H1 (cell line): ENCODE measurements at regions of chr21 and their contacts with region 1.

Region 1: GRCh38 chr21:42145569-42146272 is 73.2 kb upstream of the ABCG1 start:
- DNase-seq: peak; percentile 7 to 74
- H3K4me3 ChIP-seq: no peak overlapping the region
- H3K27ac ChIP-seq: no peak overlapping the region
- H3K4me1 ChIP-seq: no peaks in the 10 kb centered on the region
- H3K27me3 ChIP-seq: no peaks in the 10 kb centered on the region; a peak in 1 of 7 replicates
- CTCF ChIP-seq: peak; percentile 81 to 91 (median 88)
- EP300 ChIP-seq: no peak
- POLR2A ChIP-seq: no peak
- RAD21 ChIP-seq: peak; percentile 94 to 96

Region 2: GRCh38 chr21:42135386-42136052 is 10.2 kb before region 1 on chr21:
- CTCF ChIA-PET with region 1: interaction called, 10 read pairs
- POLR2A ChIA-PET with region 1: no interaction called
- DNase-seq: no peak
- H3K4me3 ChIP-seq: no peak overlapping the region
- H3K27ac ChIP-seq: no peak overlapping the region
- H3K4me1 ChIP-seq: no peaks in the 10 kb centered on the region
- H3K27me3 ChIP-seq: no peaks in the 10 kb centered on the region
- CTCF ChIP-seq: no peak
- EP300 ChIP-seq: no peak
- POLR2A ChIP-seq: no peak
- RAD21 ChIP-seq: no peak

Region 3: DNA sequence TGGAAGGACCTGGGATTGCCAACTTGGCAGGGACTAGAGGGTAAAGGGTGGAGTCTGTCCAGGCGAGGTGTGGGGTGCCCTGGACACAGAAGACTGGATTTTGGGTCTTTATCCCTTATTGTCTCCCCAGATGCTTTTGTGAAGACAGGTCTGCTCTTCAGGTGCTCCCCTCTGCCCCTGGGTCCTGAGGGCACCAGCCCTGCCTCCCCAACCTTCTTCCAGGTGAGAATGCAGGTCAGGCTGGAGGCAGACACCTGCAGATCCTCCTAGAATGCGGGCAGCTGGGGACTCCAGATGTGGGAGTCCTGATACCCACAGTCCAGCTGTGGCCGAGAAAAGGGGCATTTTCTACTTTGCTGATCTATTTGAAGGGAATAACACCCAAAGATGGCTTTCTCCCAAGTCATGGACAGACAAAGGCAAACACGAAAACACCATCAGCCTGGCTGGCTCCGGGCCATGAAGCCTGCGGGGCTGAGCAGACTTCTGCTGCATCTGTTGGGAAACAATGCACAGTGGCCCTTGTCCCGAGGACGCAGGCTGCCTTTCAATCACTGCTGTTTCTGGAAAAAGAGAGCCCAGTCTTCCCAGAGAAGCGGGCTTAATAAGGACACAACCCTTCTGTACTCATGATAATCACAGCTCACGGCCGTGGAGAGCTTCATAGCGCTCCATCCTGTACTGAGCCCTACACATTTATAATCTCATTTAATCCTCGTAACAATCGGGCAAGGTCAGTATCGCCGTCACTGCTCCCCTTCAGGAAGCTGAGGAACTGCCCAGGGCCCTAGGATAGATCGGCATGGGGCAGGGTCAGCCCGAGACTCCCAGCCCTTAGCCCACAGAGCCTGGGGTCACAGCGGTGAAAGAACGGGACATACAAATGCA is 11.2 kb after region 1 on chr21:
- CTCF ChIA-PET with region 1: interaction called, 20 read pairs
- POLR2A ChIA-PET with region 1: no interaction called
- DNase-seq: no peak
- H3K4me3 ChIP-seq: no peak overlapping the region
- H3K27ac ChIP-seq: no peak overlapping the region
- H3K4me1 ChIP-seq: peaks cover 0 to 5% (median 2%) of the 10 kb centered on the region in 4 experiments; a peak in 5 of 7 replicates
- H3K27me3 ChIP-seq: no peaks in the 10 kb centered on the region
- CTCF ChIP-seq: no peak
- EP300 ChIP-seq: no peak
- POLR2A ChIP-seq: no peak
- RAD21 ChIP-seq: no peak

Region 4: DNA sequence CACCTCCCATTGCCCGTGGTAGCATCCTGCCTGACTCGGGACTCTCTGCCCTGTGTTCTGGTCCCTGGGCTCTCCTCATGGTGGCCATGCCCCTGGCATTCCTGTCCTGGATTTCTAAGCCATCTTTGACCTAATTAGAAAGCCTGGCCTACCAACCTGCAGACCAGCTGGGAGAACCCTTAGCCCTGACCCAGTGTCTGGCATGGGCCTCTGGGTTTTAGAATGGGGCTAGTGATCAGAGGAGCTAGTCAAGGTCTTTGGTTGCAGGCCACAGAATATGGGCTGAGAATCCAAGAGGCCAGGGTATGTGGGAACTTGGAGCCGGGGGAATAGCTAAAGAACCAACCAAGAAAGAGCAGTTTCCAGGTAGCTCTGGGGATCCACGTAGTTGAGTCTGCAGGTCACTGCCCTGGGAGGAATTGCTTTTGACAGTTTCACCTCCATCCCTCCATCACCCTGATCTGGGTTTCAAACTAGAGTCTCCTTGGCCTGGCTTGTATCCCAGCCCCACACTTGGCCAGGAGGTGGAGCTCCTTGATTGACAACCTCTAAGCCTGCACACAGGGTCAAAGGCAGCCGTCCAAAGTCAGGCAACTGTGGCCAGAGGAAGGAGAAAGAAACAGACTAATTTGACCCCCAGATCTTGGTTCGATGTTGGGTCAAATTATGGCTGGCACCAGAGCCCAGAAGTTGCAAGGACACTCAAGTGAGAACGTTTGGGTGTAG is 18.5 kb after region 1 on chr21:
- CTCF ChIA-PET with region 1: interaction called, 20 read pairs
- POLR2A ChIA-PET with region 1: no interaction called
- DNase-seq: peak in 1 of 2 experiments; percentile 7
- H3K4me3 ChIP-seq: no peak overlapping the region
- H3K27ac ChIP-seq: no peak overlapping the region
- H3K4me1 ChIP-seq: peaks cover 0 to 5% (median 2%) of the 10 kb centered on the region in 4 experiments; a peak in 5 of 7 replicates
- H3K27me3 ChIP-seq: no peaks in the 10 kb centered on the region
- CTCF ChIP-seq: peak; percentile 57 to 73 (median 71)
- EP300 ChIP-seq: no peak
- POLR2A ChIP-seq: no peak
- RAD21 ChIP-seq: peak; percentile 77 to 88

Region 5: GRCh38 chr21:42276526-42277154 is 130.9 kb after region 1 on chr21:
- CTCF ChIA-PET with region 1: interaction called, 17 read pairs
- POLR2A ChIA-PET with region 1: no interaction called
- DNase-seq: no peak
- H3K4me3 ChIP-seq: no peak overlapping the region
- H3K27ac ChIP-seq: no peak overlapping the region
- H3K4me1 ChIP-seq: no peaks in the 10 kb centered on the region
- H3K27me3 ChIP-seq: no peaks in the 10 kb centered on the region
- CTCF ChIP-seq: peak in 2 of 3 experiments; percentile 30 to 37; a peak in 3 of 4 replicates
- EP300 ChIP-seq: no peak
- POLR2A ChIP-seq: no peak
- RAD21 ChIP-seq: peak; percentile 43 to 49; a peak in 3 of 4 replicates

Region 6: GRCh38 chr21:42309753-42310221 is 164.1 kb after region 1 on chr21:
- CTCF ChIA-PET with region 1: interaction called, 12 read pairs
- POLR2A ChIA-PET with region 1: no interaction called
- DNase-seq: peak in 1 of 2 experiments; percentile 96
- H3K4me3 ChIP-seq: peak overlapping the region in 3 of 4 experiments; percentile 28 to 54 (median 30); a peak in 4 of 8 replicates
- H3K27ac ChIP-seq: no peak overlapping the region
- H3K4me1 ChIP-seq: peaks cover 4 to 14% (median 6%) of the 10 kb centered on the region in 4 experiments
- H3K27me3 ChIP-seq: peaks cover 0 to 7% (median 3%) of the 10 kb centered on the region in 4 experiments; a peak in 2 of 7 replicates
- CTCF ChIP-seq: peak in 2 of 3 experiments; percentile 85 to 88; a peak in 3 of 4 replicates
- EP300 ChIP-seq: no peak
- POLR2A ChIP-seq: no peak
- RAD21 ChIP-seq: peak; percentile 77 to 86

Region 7: GRCh38 chr21:42337830-42338728 is 192.4 kb after region 1 on chr21:
- CTCF ChIA-PET with region 1: interaction called, 10 read pairs
- POLR2A ChIA-PET with region 1: no interaction called
- DNase-seq: peak; percentile 54 to 89
- H3K4me3 ChIP-seq: no peak overlapping the region
- H3K27ac ChIP-seq: no peak overlapping the region
- H3K4me1 ChIP-seq: peaks cover 0 to 13% (median 4%) of the 10 kb centered on the region in 4 experiments; a peak in 6 of 7 replicates
- H3K27me3 ChIP-seq: no peaks in the 10 kb centered on the region
- CTCF ChIP-seq: peak; percentile 86 to 94 (median 89)
- EP300 ChIP-seq: no peak
- POLR2A ChIP-seq: no peak
- RAD21 ChIP-seq: peak; percentile 71 to 77